ENCODE measurements at regions of chr7 and their contacts with region 1.

Region 1: GRCh38 chr7:38107486-38107893 is 70.6 kb upstream of the STARD3NL start:
- DNase-seq: peak; percentile 80
- ATAC-seq: peak; percentile 91
- H3K4me3 ChIP-seq: no peak overlapping the region
- H3K27ac ChIP-seq: no peak overlapping the region
- H3K4me1 ChIP-seq: no peaks in the 10 kb centered on the region
- H3K27me3 ChIP-seq: peaks cover 10% of the 10 kb centered on the region
- CTCF ChIP-seq: peak; percentile 82

Region 2: GRCh38 chr7:38222481-38223096 is 115.1 kb after region 1 on chr7:
- CTCF ChIA-PET with region 1: interaction called, 16 read pairs
- POLR2A ChIA-PET with region 1: no interaction called
- intact Hi-C with region 1: loop called (anchors 1 kb)
- DNase-seq: peak; percentile 79
- ATAC-seq: peak; percentile 79
- H3K4me3 ChIP-seq: no peak overlapping the region
- H3K27ac ChIP-seq: no peak overlapping the region
- H3K4me1 ChIP-seq: no peaks in the 10 kb centered on the region
- H3K27me3 ChIP-seq: no peaks in the 10 kb centered on the region
- CTCF ChIP-seq: peak; percentile 89

Region 3: GRCh38 chr7:38296059-38296857 is 188.8 kb after region 1 on chr7:
- CTCF ChIA-PET with region 1: interaction called, 10 read pairs
- POLR2A ChIA-PET with region 1: no interaction called
- intact Hi-C with region 1: no loop called
- DNase-seq: no peak
- ATAC-seq: no peak
- H3K4me3 ChIP-seq: no peak overlapping the region
- H3K27ac ChIP-seq: no peak overlapping the region
- H3K4me1 ChIP-seq: no peaks in the 10 kb centered on the region
- H3K27me3 ChIP-seq: peaks cover 56% of the 10 kb centered on the region
- CTCF ChIP-seq: no peak

Region 4: GRCh38 chr7:38318803-38319416 is 211.4 kb after region 1 on chr7:
- CTCF ChIA-PET with region 1: interaction called, 3 read pairs
- POLR2A ChIA-PET with region 1: no interaction called
- intact Hi-C with region 1: loop called (anchors 1 kb)
- DNase-seq: peak; percentile 73
- ATAC-seq: peak; percentile 93
- H3K4me3 ChIP-seq: no peak overlapping the region
- H3K27ac ChIP-seq: no peak overlapping the region
- H3K4me1 ChIP-seq: peaks cover 12% of the 10 kb centered on the region
- H3K27me3 ChIP-seq: no peaks in the 10 kb centered on the region
- CTCF ChIP-seq: peak; percentile 72

Measured in PC-3 (cell line).